Naive thymus-derived CD4-positive, alpha-beta T cell (primary cell): ENCODE measurements at regions of chr16 and their contacts with region 1.

Region 1: DNA sequence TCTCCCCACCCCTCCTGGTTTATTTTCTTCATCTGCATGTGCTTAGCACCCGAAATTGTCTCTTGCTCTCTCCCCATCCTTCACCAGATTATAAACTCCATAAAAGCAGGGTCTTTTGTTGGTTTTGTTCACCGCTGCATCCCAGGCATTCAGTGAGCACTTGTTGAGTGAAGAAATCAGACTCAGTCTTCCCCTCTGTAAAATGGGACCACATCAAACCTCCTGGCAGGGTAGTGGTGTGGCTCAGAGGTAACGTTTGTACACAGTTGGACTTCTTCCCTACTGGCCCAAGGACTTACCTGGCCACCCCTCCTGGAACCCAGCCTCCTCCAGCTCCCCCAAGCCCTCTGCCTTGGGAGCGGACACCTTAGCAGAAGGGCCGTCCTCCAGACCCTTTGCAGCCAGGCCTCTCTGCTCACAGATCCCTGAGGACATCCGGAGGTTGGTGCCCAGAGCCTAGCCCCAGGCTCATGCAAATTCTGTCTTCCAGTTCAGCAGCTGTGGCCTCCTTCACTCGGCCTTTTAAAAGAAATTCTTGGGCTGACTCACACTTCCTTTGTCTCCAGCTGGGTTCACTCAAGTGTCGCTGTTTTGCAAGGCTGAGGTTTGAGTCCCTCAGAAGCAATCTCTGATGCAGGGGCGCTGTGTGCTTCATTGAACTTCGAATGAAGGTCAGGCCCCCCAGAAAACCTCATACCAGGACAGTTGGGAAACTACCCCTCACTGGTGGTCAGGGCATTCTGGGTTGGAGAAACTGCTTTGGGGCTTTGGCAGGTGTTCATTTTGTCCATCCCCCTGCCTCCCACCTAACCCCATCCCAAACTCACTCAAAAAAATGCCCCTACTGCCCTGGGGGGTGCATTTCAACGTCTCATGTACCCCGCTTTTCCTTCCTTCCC is 16.8 kb upstream of the RMI2 start:
- DNase-seq: peak in 7 of 9 donors; percentile 24 to 52 (median 30)
- ATAC-seq: peak; percentile 83
- H3K4me3 ChIP-seq: peak overlapping the region; percentile 32
- H3K4me3 Mint-ChIP-seq: peak overlapping the region; percentile 46 to 85 (median 70)
- H3K27ac ChIP-seq: no peak overlapping the region
- H3K27ac Mint-ChIP-seq: peak overlapping the region; percentile 21 to 88 (median 73)
- H3K4me1 ChIP-seq: peaks cover 8 to 17% of the 10 kb centered on the region in 2 donors
- H3K4me1 Mint-ChIP-seq: peaks cover 11 to 68% (median 26%) of the 10 kb centered on the region in 7 donors
- H3K27me3 ChIP-seq: no peaks in the 10 kb centered on the region
- H3K27me3 Mint-ChIP-seq: peaks cover 0 to 4% (median 0%) of the 10 kb centered on the region in 5 donors

Region 2: DNA sequence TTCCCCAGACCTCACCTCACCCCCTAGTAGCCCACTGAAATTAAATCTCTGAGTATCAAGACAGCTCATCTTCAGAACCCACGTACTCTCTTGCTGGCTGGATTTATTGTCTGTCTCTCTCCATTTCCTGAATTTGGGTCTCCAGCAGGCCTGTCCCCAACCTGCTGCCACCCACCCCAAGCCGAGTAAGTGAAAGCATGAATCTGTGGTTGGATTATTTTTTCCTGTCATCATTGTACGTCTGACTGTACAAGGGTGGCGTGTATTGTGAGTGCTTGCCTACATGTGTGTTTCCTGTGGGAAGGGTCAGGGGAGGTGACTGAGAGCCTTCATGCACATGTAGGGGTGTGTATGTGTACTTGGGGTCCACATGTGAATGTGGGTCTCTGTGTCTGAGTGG is 64.7 kb before region 1 on chr16:
- CTCF ChIA-PET with region 1: no interaction called
- POLR2A ChIA-PET with region 1: no interaction called
- intact Hi-C with region 1: no loop called
- DNase-seq: peak in 8 of 9 donors; percentile 35 to 71 (median 59)
- ATAC-seq: peak; percentile 83
- H3K4me3 ChIP-seq: no peak overlapping the region
- H3K4me3 Mint-ChIP-seq: peak overlapping the region; percentile 34 to 79 (median 65)
- H3K27ac ChIP-seq: peak overlapping the region; percentile 33
- H3K27ac Mint-ChIP-seq: peak overlapping the region; percentile 78 to 95 (median 90)
- H3K4me1 ChIP-seq: peaks cover 14 to 28% of the 10 kb centered on the region in 2 donors
- H3K4me1 Mint-ChIP-seq: peaks cover 21 to 47% (median 37%) of the 10 kb centered on the region in 7 donors
- H3K27me3 ChIP-seq: no peaks in the 10 kb centered on the region
- H3K27me3 Mint-ChIP-seq: peaks cover 0 to 12% (median 0%) of the 10 kb centered on the region in 5 donors

Region 3: DNA sequence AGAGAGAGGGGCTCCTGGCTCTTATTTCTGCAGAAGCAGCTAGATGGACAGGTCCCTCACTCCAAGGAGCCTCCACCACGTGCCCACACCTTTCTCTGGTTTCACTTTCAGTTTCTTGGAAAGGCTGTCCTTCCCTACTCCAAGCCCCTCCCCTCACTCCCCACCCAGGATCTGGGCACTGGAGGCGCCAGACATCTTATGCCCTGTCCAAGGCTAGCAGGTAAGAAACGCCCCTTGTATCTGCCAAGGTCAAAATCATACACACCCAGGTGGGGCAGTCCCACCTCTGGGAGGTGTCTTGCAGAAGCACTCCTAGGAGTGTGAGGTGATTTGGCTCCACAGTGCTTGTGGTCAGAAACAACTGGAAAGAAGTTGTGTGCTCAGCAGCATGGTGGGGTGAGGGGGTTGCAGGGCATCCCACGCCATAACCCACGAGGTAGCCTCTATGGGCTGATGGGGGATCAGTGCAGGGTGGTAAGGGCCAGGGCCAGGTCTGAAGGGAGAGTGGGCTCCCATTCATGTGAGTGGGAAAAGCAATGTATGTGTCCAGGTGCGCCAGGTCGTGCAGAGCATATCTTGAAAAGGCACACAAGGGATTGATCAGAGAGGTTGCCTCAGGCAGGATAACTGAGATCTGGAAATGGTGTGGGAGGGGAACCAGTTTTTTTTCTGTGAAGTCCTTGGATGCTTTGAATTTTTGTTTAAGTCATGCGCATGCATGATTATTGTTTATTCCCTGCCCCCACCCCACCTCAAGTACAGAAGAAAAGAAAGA is 15.5 kb before region 1 on chr16:
- CTCF ChIA-PET with region 1: interaction called, 3 read pairs
- POLR2A ChIA-PET with region 1: no interaction called
- intact Hi-C with region 1: loop called in 1 of 2 experiments (anchors 1 kb)
- DNase-seq: peak in 2 of 9 donors; percentile 15 to 17
- ATAC-seq: peak; percentile 17
- H3K4me3 ChIP-seq: peak overlapping the region; percentile 23
- H3K4me3 Mint-ChIP-seq: peak overlapping the region; percentile 35 to 72 (median 58)
- H3K27ac ChIP-seq: no peak overlapping the region
- H3K27ac Mint-ChIP-seq: peak overlapping the region; percentile 11 to 91 (median 75)
- H3K4me1 ChIP-seq: peaks cover 23 to 34% of the 10 kb centered on the region in 2 donors
- H3K4me1 Mint-ChIP-seq: peaks cover 5 to 69% (median 31%) of the 10 kb centered on the region in 7 donors
- H3K27me3 ChIP-seq: no peaks in the 10 kb centered on the region
- H3K27me3 Mint-ChIP-seq: peaks cover 0 to 2% (median 0%) of the 10 kb centered on the region in 5 donors

Region 4: GRCh38 chr16:11345040-11345862 is 16.8 kb after region 1 on chr16 and contains the start of gene RMI2:
- CTCF ChIA-PET with region 1: no interaction called
- POLR2A ChIA-PET with region 1: no interaction called
- intact Hi-C with region 1: loop called in 1 of 2 experiments (anchors 1 kb)
- DNase-seq: peak; percentile 90 to 98 (median 95)
- ATAC-seq: peak; percentile 99
- H3K4me3 ChIP-seq: peak within 1 kb of the TSS; percentile 44
- H3K4me3 Mint-ChIP-seq: peak within 1 kb of the TSS; percentile 79 to 98 (median 92)
- H3K27ac ChIP-seq: peak within 1 kb of the TSS; percentile 65
- H3K27ac Mint-ChIP-seq: peak within 1 kb of the TSS; percentile 58 to 99 (median 83)
- H3K4me1 ChIP-seq: no peaks in the 10 kb centered on the region
- H3K4me1 Mint-ChIP-seq: peaks cover 10 to 49% (median 24%) of the 10 kb centered on the region in 7 donors
- H3K27me3 ChIP-seq: no peaks in the 10 kb centered on the region
- H3K27me3 Mint-ChIP-seq: no peaks in the 10 kb centered on the region
- total RNA-seq, gene RMI2: 1.8 to 57.0 (median 3.3) TPM